ENCODE measurements at regions of chr1 and their contacts with region 1.

Region 1: DNA sequence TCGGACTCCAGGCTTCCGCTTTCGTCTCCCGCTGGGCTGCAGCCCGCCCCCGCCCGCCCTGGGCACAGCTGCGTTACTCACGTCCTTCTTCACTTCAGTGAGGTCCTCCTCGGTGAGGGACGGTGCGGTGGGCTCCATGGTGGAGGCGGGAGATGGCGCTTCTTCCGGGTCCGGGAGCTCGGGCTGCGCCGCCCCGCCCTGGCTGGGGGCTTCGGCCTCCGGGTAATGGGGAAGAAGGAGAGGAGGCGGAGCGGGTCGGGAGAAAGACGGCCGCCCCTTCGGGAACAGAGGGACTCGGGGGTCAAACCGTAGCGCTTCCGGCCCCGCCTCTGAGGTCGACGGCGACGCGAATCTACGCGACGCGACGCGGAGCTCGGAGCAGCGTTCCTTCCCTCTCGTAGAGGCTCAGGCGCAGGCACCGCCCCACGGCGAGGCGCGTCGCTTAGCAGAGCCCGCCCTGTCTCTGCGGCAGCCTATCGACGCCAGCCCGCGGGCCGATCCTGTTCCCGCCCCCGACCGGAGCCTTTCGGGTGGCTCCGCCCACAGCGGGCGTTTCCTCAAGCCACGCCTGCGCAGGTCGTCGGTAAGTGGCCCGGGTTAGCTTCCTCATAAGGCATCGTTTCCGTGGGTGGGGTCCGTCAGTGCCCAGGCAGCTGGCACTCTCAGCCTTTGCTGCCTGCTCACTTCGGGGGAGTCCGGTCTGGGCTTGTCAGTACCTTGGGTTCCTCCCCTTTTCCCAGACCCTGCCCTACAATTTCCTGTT is at the start of gene BCL10:
- DNase-seq: peak; percentile 98
- ATAC-seq: peak; percentile 99
- H3K4me3 Mint-ChIP-seq: peak within 1 kb of the TSS; percentile 81
- H3K27ac Mint-ChIP-seq: peak within 1 kb of the TSS; percentile 95
- H3K4me1 Mint-ChIP-seq: peaks cover 45% of the 10 kb centered on the region
- H3K27me3 Mint-ChIP-seq: peaks cover 7% of the 10 kb centered on the region
- total RNA-seq, gene BCL10: 26.4 to 27.0 TPM

Region 2: GRCh38 chr1:85109475-85109874 is 166.9 kb before region 1 on chr1:
- CTCF ChIA-PET with region 1: interaction called, 11 read pairs
- POLR2A ChIA-PET with region 1: no interaction called
- DNase-seq: peak; percentile 48
- ATAC-seq: peak; percentile 85
- H3K4me3 Mint-ChIP-seq: no peak overlapping the region
- H3K27ac Mint-ChIP-seq: no peak overlapping the region
- H3K4me1 Mint-ChIP-seq: no peaks in the 10 kb centered on the region
- H3K27me3 Mint-ChIP-seq: peaks cover 16% of the 10 kb centered on the region

Region 3: GRCh38 chr1:85240174-85240601 is 36.2 kb before region 1 on chr1:
- CTCF ChIA-PET with region 1: no interaction called
- POLR2A ChIA-PET with region 1: no interaction called
- DNase-seq: peak; percentile 31
- ATAC-seq: no peak
- H3K4me3 Mint-ChIP-seq: no peak overlapping the region
- H3K27ac Mint-ChIP-seq: peak overlapping the region; percentile 61
- H3K4me1 Mint-ChIP-seq: peaks cover 22% of the 10 kb centered on the region
- H3K27me3 Mint-ChIP-seq: peaks cover 5% of the 10 kb centered on the region

Region 4: DNA sequence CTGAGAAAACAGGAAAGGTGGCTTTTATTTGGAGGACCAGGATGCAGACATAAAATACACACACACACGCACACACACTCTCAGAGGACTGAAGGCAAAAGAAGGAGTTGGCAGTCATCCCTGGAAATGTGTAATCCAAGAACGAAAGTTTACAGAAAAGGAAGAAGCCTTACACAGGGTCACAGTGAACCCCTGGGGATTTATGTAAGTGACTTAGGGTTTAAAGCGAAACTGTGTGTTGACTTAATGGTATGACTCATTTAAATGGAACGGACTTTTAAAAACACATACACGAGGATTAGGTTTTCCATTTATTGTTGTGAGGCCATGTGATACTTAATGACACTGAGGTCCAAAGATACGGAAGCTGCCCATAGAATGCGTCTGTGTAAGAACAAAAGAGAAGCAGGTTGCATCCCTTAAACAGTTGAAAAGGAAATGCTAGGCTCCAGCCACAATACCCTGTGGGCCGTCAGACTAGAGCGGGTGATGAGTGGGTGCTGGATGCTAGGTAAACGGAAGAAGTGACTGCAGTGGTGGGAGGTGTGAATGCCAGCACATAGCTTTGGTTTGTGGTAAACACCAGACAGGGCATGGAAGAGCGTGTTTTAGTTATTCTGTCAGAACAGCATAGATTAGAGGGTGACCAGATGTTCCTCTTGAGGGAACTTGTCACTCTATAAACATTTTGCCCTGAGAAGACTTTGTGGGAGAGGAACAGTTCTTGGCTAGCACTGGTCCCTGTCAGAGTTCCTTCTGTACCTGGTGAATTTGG is 21.6 kb after region 1 on chr1:
- CTCF ChIA-PET with region 1: interaction called, 4 read pairs
- POLR2A ChIA-PET with region 1: interaction called, 11 read pairs
- DNase-seq: peak; percentile 78
- ATAC-seq: peak; percentile 94
- H3K4me3 Mint-ChIP-seq: peak overlapping the region; percentile 8
- H3K27ac Mint-ChIP-seq: peak overlapping the region; percentile 3
- H3K4me1 Mint-ChIP-seq: peaks cover 22% of the 10 kb centered on the region
- H3K27me3 Mint-ChIP-seq: peaks cover 38% of the 10 kb centered on the region